PC-3 (cell line): ENCODE measurements at regions of chr7 and their contacts with region 1.

Region 1: DNA sequence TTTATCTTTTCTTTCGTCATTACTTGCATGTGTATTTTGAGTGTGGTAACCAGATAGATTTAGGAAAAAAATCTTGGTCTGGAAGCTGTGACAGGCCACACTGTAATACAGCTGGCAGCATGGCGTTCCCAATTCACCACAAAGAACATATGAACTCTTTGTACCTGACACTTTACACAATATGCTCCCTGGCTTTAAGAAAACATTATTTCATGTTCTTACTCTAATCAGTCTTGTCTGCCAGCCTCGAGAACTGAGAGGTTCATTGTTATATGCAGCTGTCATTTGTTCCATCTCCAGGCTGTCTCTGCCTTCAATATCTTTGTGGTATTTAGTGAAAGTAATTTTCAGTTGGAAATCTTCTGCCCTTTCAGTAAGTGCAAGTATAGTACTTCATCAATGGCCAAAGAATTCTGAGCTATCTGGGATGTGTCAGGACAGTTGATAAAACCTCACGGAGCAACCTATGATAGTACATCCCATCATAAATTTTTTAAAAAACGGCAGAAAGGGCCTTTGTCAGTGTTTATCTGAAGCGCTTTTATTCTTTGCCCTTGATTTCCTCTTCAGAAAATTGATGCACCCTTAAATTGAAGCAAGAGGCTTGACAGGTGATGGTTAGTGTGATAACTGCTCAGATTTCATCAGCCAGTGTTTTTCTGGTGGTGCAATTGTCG is 146.2 kb upstream of the SP8 start:
- DNase-seq: no peak
- ATAC-seq: no peak
- H3K4me3 ChIP-seq: no peak overlapping the region
- H3K27ac ChIP-seq: no peak overlapping the region
- H3K4me1 ChIP-seq: no peaks in the 10 kb centered on the region
- H3K27me3 ChIP-seq: peaks cover 79% of the 10 kb centered on the region
- CTCF ChIP-seq: no peak

Region 2: DNA sequence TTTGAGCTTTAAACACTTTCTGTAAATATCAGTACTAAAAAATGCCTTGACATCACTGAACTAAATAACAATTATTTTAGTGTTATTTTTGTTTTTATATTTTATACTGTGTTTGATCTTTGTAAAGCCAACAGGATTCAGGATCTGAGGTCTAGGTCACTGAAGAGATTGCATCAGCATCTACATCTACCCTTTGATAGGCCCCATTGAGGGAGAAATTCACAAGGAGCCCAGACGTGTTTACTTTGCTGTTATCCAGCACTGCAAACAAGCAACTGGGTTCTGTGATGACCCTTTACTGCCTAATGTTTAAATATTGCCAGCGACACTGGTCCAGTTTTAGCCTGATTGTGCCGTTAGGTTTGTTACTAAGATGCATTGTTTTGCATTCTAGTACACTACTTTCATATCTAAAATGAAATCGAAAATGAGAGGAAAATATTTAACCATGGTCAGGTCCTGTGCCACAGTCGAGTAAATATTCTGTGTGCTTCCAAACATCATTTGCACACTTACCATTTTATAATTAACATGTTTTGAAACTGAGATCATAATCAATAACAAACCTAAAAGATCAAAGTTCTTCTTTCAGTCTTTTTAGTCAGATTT is 195.0 kb before region 1 on chr7:
- CTCF ChIA-PET with region 1: no interaction called
- POLR2A ChIA-PET with region 1: no interaction called
- intact Hi-C with region 1: no loop called
- DNase-seq: no peak
- ATAC-seq: no peak
- H3K4me3 ChIP-seq: no peak overlapping the region
- H3K27ac ChIP-seq: no peak overlapping the region
- H3K4me1 ChIP-seq: no peaks in the 10 kb centered on the region
- H3K27me3 ChIP-seq: peaks cover 48% of the 10 kb centered on the region
- CTCF ChIP-seq: no peak

Region 3: GRCh38 chr7:20916311-20916710 is 16.6 kb before region 1 on chr7:
- CTCF ChIA-PET with region 1: no interaction called
- POLR2A ChIA-PET with region 1: interaction called, 10 read pairs
- intact Hi-C with region 1: no loop called
- DNase-seq: no peak
- ATAC-seq: no peak
- H3K4me3 ChIP-seq: no peak overlapping the region
- H3K27ac ChIP-seq: no peak overlapping the region
- H3K4me1 ChIP-seq: no peaks in the 10 kb centered on the region
- H3K27me3 ChIP-seq: peaks cover 38% of the 10 kb centered on the region; the same call in 1 of the 2 replicates
- CTCF ChIP-seq: no peak

Region 4: GRCh38 chr7:21011118-21011517 is 78.2 kb after region 1 on chr7:
- CTCF ChIA-PET with region 1: no interaction called
- POLR2A ChIA-PET with region 1: no interaction called
- intact Hi-C with region 1: no loop called
- DNase-seq: peak; percentile 97
- ATAC-seq: peak; percentile 91
- H3K4me3 ChIP-seq: no peak overlapping the region
- H3K27ac ChIP-seq: peak overlapping the region; percentile 64
- H3K4me1 ChIP-seq: peaks cover 24% of the 10 kb centered on the region
- H3K27me3 ChIP-seq: no peaks in the 10 kb centered on the region
- CTCF ChIP-seq: no peak